Dorsolateral prefrontal cortex (tissue), 120 donors: ENCODE measurements at regions of chr1 and their contacts with region 1.

Region 1: GRCh38 chr1:174074757-174075156 is 52.6 kb upstream of the RC3H1 start:
- DNase-seq: no peak
- H3K4me3 ChIP-seq: peak overlapping the region in 1 of 59 donors; percentile 0
- H3K27ac ChIP-seq: no peak overlapping the region
- H3K27me3 ChIP-seq: peaks cover 0 to 2% (median 0%) of the 10 kb centered on the region in 45 donors
- CTCF ChIP-seq: peak in 55 of 56 donors; percentile 20 to 81 (median 56)

Region 2: GRCh38 chr1:173429471-173430402 is 645.0 kb before region 1 on chr1:
- intact Hi-C with region 1: loop called in 1 of 2 experiments (anchors 10 kb)
- DNase-seq: peak; percentile 14 to 91 (median 81)
- H3K4me3 ChIP-seq: peak overlapping the region in 57 of 59 donors; percentile 2 to 56 (median 40)
- H3K27ac ChIP-seq: peak overlapping the region in 58 of 59 donors; percentile 23 to 89 (median 80)
- H3K27me3 ChIP-seq: no peaks in the 10 kb centered on the region
- CTCF ChIP-seq: peak; percentile 52 to 84 (median 72)

Region 3: GRCh38 chr1:173867753-173868265 is 206.9 kb before region 1 on chr1 and contains the start of gene GAS5:
- intact Hi-C with region 1: loop called in 1 of 2 experiments (anchors 2 kb)
- DNase-seq: peak; percentile 91 to 99 (median 98)
- H3K4me3 ChIP-seq: peak within 1 kb of the TSS; percentile 64 to 99 (median 91)
- H3K27ac ChIP-seq: peak within 1 kb of the TSS; percentile 83 to 99 (median 97)
- H3K27me3 ChIP-seq: no peaks in the 10 kb centered on the region
- CTCF ChIP-seq: peak in 9 of 56 donors; percentile 1 to 33 (median 22)
- total RNA-seq, gene GAS5: 88.6 to 204 (median 118) TPM

Region 4: DNA sequence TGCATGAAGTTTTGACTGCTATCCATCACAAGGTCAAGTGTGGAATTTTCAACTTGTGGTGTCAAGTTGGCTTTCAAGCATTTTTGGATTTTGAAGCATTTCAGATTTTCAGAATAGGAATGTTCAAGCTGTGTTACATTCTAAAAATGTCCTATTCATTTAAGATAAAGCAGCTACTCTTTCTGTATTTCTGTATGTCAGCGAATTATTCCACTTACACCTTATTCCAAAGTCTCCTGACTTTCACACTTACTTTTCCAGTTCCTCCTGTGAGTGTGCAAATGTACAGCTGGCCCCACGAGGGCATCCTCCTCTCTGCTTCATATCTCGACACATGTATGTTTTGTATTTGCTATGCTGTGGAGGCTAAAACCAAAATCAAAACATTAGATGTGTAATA is 104.5 kb before region 1 on chr1:
- intact Hi-C with region 1: loop called in 1 of 2 experiments (anchors 10 kb)
- DNase-seq: no peak
- H3K4me3 ChIP-seq: no peak overlapping the region
- H3K27ac ChIP-seq: no peak overlapping the region
- H3K27me3 ChIP-seq: no peaks in the 10 kb centered on the region
- CTCF ChIP-seq: no peak

Region 5: GRCh38 chr1:174022080-174022975 is 52.4 kb before region 1 on chr1 and contains the start of gene RC3H1:
- intact Hi-C with region 1: loop called in 1 of 2 experiments (anchors 5 kb)
- DNase-seq: peak; percentile 77 to 96 (median 90)
- H3K4me3 ChIP-seq: peak within 1 kb of the TSS; percentile 64 to 99 (median 88)
- H3K27ac ChIP-seq: peak within 1 kb of the TSS; percentile 66 to 98 (median 95)
- H3K27me3 ChIP-seq: no peaks in the 10 kb centered on the region
- CTCF ChIP-seq: peak in 8 of 56 donors; percentile 14 to 51 (median 23)
- total RNA-seq, gene RC3H1: 32.3 to 65.7 (median 46.7) TPM

Region 6: GRCh38 chr1:174414203-174414602 is 339.4 kb after region 1 on chr1:
- intact Hi-C with region 1: no loop called
- DNase-seq: no peak
- H3K4me3 ChIP-seq: peak overlapping the region in 11 of 59 donors; percentile 3 to 49 (median 10)
- H3K27ac ChIP-seq: peak overlapping the region in 1 of 59 donors; percentile 43
- H3K27me3 ChIP-seq: no peaks in the 10 kb centered on the region
- CTCF ChIP-seq: no peak